Breast epithelium (tissue), 4 donors: ENCODE measurements at regions of chr6 and their contacts with region 1.

Region 1: DNA sequence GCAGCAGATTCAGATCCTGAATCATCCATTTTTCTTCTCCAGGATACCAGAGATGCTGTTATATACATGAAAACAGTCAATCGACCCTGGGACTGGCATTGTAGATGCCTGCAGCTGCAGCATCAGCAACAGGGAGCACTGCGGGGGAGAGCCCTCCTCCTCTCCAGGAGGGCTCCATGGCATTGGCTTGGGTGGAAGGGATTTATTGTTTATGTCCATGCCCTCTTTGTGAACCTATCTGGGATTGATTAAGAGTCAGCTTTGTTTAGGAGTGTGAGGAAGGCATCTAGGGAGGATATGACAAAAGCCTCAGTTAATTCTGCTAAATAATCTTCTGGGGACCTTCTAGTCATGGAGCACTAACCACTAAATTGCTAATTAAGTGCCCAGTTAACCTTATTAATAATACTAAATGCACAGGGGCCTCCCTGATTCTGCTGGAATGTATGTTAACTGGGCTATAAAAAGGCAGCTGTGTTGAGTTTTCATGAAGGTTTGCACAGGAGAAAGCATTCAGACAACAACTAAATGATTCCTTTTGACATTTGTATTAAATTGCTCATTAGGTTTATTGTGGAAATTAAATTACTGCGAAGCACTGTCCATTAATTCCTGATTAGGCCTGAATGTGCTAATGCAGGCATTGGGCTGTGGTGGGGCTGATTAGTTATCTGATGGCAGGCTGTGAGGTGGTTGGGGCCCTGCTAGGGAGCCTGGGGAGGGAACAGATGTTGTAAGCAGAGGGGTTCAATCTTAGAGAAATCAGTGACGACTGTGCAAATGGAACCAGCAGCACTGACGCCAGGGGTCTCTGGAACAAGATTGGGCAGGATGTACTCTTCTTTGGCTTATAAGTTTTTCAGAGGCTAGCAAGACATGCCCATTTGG is 57.6 kb downstream of the IMPG1 start:
- DNase-seq: no peak
- H3K4me3 ChIP-seq: no peak overlapping the region
- H3K27ac ChIP-seq: no peak overlapping the region
- H3K4me1 ChIP-seq: no peaks in the 10 kb centered on the region
- H3K27me3 ChIP-seq: no peaks in the 10 kb centered on the region
- CTCF ChIP-seq: no peak
- POLR2A ChIP-seq: no peak

Region 2: GRCh38 chr6:74402781-74403180 is 1612.1 kb before region 1 on chr6:
- intact Hi-C with region 1: no loop called
- DNase-seq: no peak
- H3K4me3 ChIP-seq: no peak overlapping the region
- H3K27ac ChIP-seq: no peak overlapping the region
- H3K4me1 ChIP-seq: no peaks in the 10 kb centered on the region
- H3K27me3 ChIP-seq: no peaks in the 10 kb centered on the region
- CTCF ChIP-seq: no peak
- POLR2A ChIP-seq: no peak

Region 3: DNA sequence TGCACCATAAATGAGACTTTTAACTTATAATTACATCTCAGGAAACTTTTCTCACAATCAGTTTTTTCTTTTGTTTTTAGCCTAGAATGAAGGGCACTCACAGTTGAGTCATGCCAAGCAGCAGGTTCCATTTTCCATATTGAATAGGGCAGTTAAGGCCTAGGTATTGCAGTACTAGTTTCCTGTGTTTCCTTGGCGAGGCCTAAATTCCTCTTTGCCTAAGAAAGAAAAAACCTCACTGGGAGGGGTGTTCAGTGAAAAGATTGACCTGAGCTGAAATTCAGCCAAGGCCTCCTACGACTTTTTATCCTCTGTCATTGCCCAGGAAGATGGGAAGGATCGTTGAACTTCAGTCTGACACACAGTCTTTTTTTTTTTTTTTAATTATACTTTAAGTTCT is 27.9 kb before region 1 on chr6:
- intact Hi-C with region 1: loop called (anchors 2 kb)
- DNase-seq: no peak
- H3K4me3 ChIP-seq: no peak overlapping the region
- H3K27ac ChIP-seq: no peak overlapping the region
- H3K4me1 ChIP-seq: no peaks in the 10 kb centered on the region
- H3K27me3 ChIP-seq: no peaks in the 10 kb centered on the region
- CTCF ChIP-seq: no peak
- POLR2A ChIP-seq: no peak